ENCODE measurements at regions of chr11 and their contacts with region 1.

Region 1: DNA sequence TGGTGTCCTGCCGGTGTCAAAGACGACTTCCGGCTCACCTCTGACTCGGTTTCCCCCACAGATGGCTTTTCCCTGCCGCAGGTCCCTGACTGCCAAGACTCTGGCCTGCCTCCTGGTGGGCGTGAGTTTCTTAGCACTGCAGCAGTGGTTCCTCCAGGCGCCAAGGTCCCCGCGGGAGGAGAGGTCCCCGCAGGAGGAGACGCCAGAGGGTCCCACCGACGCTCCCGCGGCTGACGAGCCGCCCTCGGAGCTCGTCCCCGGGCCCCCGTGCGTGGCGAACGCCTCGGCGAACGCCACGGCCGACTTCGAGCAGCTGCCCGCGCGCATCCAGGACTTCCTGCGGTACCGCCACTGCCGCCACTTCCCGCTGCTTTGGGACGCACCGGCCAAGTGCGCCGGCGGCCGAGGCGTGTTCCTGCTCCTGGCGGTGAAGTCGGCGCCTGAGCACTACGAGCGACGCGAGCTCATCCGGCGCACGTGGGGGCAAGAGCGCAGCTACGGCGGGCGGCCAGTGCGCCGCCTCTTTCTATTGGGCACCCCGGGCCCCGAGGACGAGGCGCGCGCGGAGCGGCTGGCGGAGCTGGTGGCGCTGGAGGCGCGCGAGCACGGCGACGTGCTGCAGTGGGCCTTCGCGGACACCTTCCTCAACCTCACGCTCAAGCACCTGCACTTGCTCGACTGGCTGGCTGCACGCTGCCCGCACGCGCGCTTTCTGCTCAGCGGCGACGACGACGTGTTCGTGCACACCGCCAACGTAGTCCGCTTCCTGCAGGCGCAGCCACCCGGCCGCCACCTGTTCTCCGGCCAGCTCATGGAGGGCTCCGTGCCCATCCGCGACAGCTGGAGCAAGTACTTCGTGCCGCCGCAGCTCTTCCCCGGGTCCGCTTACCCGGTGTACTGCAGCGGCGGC is 5.5 kb downstream of the B3GNT6 start:
- DNase-seq: peak; percentile 33
- H3K27ac ChIP-seq: no peak overlapping the region
- CTCF ChIP-seq: peak; percentile 31

Region 2: GRCh38 chr11:76927160-76927559 is 112.6 kb before region 1 on chr11:
- CTCF ChIA-PET with region 1: no interaction called
- POLR2A ChIA-PET with region 1: no interaction called
- DNase-seq: no peak
- H3K27ac ChIP-seq: no peak overlapping the region
- CTCF ChIP-seq: no peak

Region 3: GRCh38 chr11:77024745-77025144 is 15.0 kb before region 1 on chr11:
- CTCF ChIA-PET with region 1: interaction called, 12 read pairs
- POLR2A ChIA-PET with region 1: interaction called, 4 read pairs
- DNase-seq: no peak
- H3K27ac ChIP-seq: no peak overlapping the region
- CTCF ChIP-seq: no peak

Measured in RWPE1 (cell line).